ENCODE measurements at regions of chr3 and their contacts with region 1.

Region 1: GRCh38 chr3:191356611-191357439 is 26.5 kb upstream of the UTS2B start:
- DNase-seq: no peak
- ATAC-seq: 0 out of 3 replicates have a peak, but pooled peaks have one; percentile 5
- H3K4me3 ChIP-seq: no peak overlapping the region
- H3K27ac ChIP-seq: peak overlapping the region; percentile 28; the same call in 1 of the 2 replicates
- H3K4me1 ChIP-seq: peaks cover 26% of the 10 kb centered on the region
- H3K27me3 ChIP-seq: no peaks in the 10 kb centered on the region
- CTCF ChIP-seq: no peak
- EP300 ChIP-seq: no peak
- POLR2A ChIP-seq: no peak
- RAD21 ChIP-seq: no peak

Region 2: GRCh38 chr3:191263365-191263764 is 93.5 kb before region 1 on chr3:
- CTCF ChIA-PET with region 1: interaction called, 4 read pairs
- POLR2A ChIA-PET with region 1: interaction called, 6 read pairs
- RAD21 ChIA-PET with region 1: interaction called, 15 read pairs
- SMC1A ChIA-PET with region 1: interaction called, 14 read pairs
- in situ Hi-C with region 1: no loop called
- intact Hi-C with region 1: no loop called
- DNase-seq: no peak
- ATAC-seq: peak; percentile 98
- H3K4me3 ChIP-seq: peak overlapping the region; percentile 10; the same call in 1 of the 2 replicates
- H3K27ac ChIP-seq: peak overlapping the region; percentile 40
- H3K4me1 ChIP-seq: peaks cover 8% of the 10 kb centered on the region; the same call in 1 of the 2 replicates
- H3K27me3 ChIP-seq: no peaks in the 10 kb centered on the region
- CTCF ChIP-seq: no peak
- EP300 ChIP-seq: no peak
- POLR2A ChIP-seq: no peak
- RAD21 ChIP-seq: no peak

Region 3: GRCh38 chr3:191282262-191283215 is 74.3 kb before region 1 on chr3:
- CTCF ChIA-PET with region 1: interaction called, 3 read pairs
- POLR2A ChIA-PET with region 1: interaction called, 3 read pairs
- RAD21 ChIA-PET with region 1: interaction called, 11 read pairs
- SMC1A ChIA-PET with region 1: interaction called, 20 read pairs
- in situ Hi-C with region 1: no loop called
- intact Hi-C with region 1: no loop called
- DNase-seq: no peak
- ATAC-seq: peak; percentile 43
- H3K4me3 ChIP-seq: no peak overlapping the region
- H3K27ac ChIP-seq: no peak overlapping the region
- H3K4me1 ChIP-seq: peaks cover 4% of the 10 kb centered on the region; the same call in 1 of the 2 replicates
- H3K27me3 ChIP-seq: no peaks in the 10 kb centered on the region
- CTCF ChIP-seq: no peak
- EP300 ChIP-seq: no peak
- POLR2A ChIP-seq: no peak
- RAD21 ChIP-seq: no peak

Region 4: GRCh38 chr3:191296041-191296541 is 60.7 kb before region 1 on chr3:
- CTCF ChIA-PET with region 1: interaction called, 6 read pairs
- POLR2A ChIA-PET with region 1: interaction called, 4 read pairs
- RAD21 ChIA-PET with region 1: interaction called, 17 read pairs
- SMC1A ChIA-PET with region 1: interaction called, 20 read pairs
- in situ Hi-C with region 1: no loop called
- intact Hi-C with region 1: no loop called
- DNase-seq: peak; percentile 88
- ATAC-seq: peak; percentile 80
- H3K4me3 ChIP-seq: no peak overlapping the region
- H3K27ac ChIP-seq: peak overlapping the region; percentile 5; the same call in 1 of the 2 replicates
- H3K4me1 ChIP-seq: peaks cover 46% of the 10 kb centered on the region
- H3K27me3 ChIP-seq: no peaks in the 10 kb centered on the region
- CTCF ChIP-seq: no peak
- EP300 ChIP-seq: peak; percentile 88 to 98
- POLR2A ChIP-seq: no peak
- RAD21 ChIP-seq: no peak

Region 5: DNA sequence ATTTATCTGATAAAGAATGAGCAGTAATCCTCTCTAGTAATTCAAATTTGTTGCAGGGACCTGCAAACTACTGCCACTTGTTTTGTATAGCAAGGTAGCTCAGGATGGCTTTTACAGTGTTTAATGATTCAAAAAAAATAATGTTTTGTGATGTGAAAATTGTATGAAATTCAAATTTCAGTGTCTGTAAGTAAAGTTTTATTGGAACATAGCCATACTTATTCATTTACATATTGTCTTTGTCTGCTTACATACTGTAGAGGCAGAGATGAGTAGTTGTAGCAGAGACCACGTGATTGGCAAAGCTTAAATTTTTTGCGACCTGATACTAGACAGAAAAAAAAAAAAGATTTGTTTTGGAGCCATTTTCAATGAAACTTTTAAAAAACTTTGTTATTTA is 20.0 kb before region 1 on chr3:
- CTCF ChIA-PET with region 1: interaction called, 25 read pairs
- POLR2A ChIA-PET with region 1: interaction called, 49 read pairs
- RAD21 ChIA-PET with region 1: interaction called, 108 read pairs
- SMC1A ChIA-PET with region 1: interaction called, 208 read pairs
- in situ Hi-C with region 1: no loop called
- intact Hi-C with region 1: loop called (anchors 2 kb)
- DNase-seq: no peak
- ATAC-seq: peak; percentile 37
- H3K4me3 ChIP-seq: peak overlapping the region; percentile 54
- H3K27ac ChIP-seq: peak overlapping the region; percentile 15; the same call in 1 of the 2 replicates
- H3K4me1 ChIP-seq: peaks cover 12% of the 10 kb centered on the region; the same call in 1 of the 2 replicates
- H3K27me3 ChIP-seq: no peaks in the 10 kb centered on the region
- CTCF ChIP-seq: no peak
- EP300 ChIP-seq: no peak
- POLR2A ChIP-seq: no peak
- RAD21 ChIP-seq: no peak

Region 6: DNA sequence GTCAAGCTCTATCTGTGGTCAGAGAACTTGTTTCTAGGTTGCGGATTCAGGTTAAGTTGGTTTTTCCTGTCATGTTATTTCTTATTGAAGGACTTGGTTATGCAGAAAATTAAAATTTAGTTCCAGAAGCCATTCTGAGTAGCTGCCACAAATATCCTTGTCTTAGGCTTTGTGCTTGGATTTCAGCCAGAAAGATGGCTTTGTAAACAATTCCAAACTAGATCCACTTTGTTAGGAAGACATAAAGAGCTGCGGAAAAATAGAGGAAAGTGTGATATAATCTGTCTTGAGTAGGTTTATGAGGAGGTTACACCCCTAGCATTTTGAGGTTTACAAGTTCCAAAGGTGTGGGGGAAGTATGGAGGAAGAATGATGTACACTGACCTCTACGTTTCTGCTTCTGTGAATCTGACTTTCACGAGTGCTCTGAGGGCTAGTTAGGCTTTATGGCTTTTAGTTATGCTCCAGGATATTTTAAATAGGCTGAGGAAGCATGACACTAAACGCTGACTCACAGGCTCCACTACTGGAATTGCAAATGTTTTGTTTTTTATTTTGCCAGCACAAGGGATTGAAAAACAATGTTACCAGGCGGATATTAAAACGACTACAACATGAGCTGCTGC is 19.8 kb after region 1 on chr3:
- CTCF ChIA-PET with region 1: interaction called, 7 read pairs
- POLR2A ChIA-PET with region 1: interaction called, 9 read pairs
- RAD21 ChIA-PET with region 1: interaction called, 4 read pairs
- SMC1A ChIA-PET with region 1: interaction called, 51 read pairs
- in situ Hi-C with region 1: no loop called
- intact Hi-C with region 1: no loop called
- DNase-seq: no peak
- ATAC-seq: no peak
- H3K4me3 ChIP-seq: no peak overlapping the region
- H3K27ac ChIP-seq: no peak overlapping the region
- H3K4me1 ChIP-seq: peaks cover 14% of the 10 kb centered on the region
- H3K27me3 ChIP-seq: no peaks in the 10 kb centered on the region
- CTCF ChIP-seq: no peak
- EP300 ChIP-seq: no peak
- POLR2A ChIP-seq: no peak
- RAD21 ChIP-seq: no peak